Naive thymus-derived CD4-positive, alpha-beta T cell (primary cell): ENCODE measurements at regions of chr7 and their contacts with region 1.

Region 1: DNA sequence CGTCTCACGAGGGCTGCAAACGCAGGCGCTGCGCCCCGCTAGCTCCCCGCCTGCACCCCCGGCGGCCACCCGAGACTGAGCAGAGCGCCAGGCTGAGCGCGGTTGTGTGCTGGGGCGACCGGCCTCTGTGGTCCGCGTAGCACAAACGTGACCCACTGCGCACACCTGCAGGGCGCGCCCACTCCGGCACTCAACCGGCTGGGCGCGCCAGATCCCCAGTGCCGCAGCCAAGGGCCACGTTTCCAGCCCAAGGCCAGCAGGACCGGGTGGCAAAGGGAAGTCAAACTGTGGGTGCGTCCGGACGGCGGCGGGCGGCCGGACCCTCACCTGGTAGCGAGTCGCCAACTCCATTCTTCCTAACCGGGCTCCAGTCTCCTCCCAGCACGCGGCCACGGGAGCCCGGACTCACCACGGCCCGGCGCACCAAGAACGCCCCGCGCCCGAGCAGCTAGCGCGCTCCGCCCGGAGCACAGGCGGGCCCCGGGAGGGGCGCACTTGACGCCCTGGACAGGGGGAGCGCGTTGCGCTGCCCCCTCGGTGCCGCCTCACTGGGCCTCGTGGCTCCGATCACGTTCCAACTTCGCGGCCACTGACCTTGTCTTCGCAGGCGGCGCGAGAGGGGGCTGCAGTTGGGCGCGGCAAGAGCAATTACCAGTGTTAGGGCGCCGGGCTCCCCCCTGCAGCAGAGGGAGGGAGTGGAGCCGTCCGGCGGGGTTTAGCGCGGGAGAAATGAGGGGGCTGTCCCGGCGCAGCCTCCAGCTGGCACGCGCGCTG is at the start of gene CDCA7L:
- DNase-seq: peak; percentile 40 to 77 (median 66)
- ATAC-seq: peak; percentile 85
- H3K4me3 ChIP-seq: peak within 1 kb of the TSS; percentile 57
- H3K4me3 Mint-ChIP-seq: peak within 1 kb of the TSS; percentile 86 to 95 (median 92)
- H3K27ac ChIP-seq: peak within 1 kb of the TSS; percentile 56
- H3K27ac Mint-ChIP-seq: peak within 1 kb of the TSS; percentile 60 to 87 (median 75)
- H3K4me1 ChIP-seq: peaks cover 0 to 33% of the 10 kb centered on the region in 2 donors
- H3K4me1 Mint-ChIP-seq: peaks cover 29 to 80% (median 62%) of the 10 kb centered on the region in 7 donors
- H3K27me3 ChIP-seq: no peaks in the 10 kb centered on the region
- H3K27me3 Mint-ChIP-seq: peaks cover 0 to 20% (median 0%) of the 10 kb centered on the region in 5 donors
- total RNA-seq, gene CDCA7L: 24.3 to 47.0 (median 41.0) TPM

Region 2: GRCh38 chr7:21850531-21851285 is 94.9 kb before region 1 on chr7:
- CTCF ChIA-PET with region 1: interaction called, 3 read pairs
- POLR2A ChIA-PET with region 1: interaction called, 4 read pairs
- intact Hi-C with region 1: loop called in 1 of 2 experiments (anchors 2 kb)
- DNase-seq: no peak
- ATAC-seq: no peak
- H3K4me3 ChIP-seq: peak overlapping the region; percentile 27
- H3K4me3 Mint-ChIP-seq: peak overlapping the region in 9 of 10 donors; percentile 13 to 91 (median 78)
- H3K27ac ChIP-seq: no peak overlapping the region
- H3K27ac Mint-ChIP-seq: peak overlapping the region in 8 of 9 donors; percentile 85 to 97 (median 92)
- H3K4me1 ChIP-seq: peaks cover 0 to 20% of the 10 kb centered on the region in 2 donors
- H3K4me1 Mint-ChIP-seq: peaks cover 6 to 44% (median 34%) of the 10 kb centered on the region in 7 donors
- H3K27me3 ChIP-seq: no peaks in the 10 kb centered on the region
- H3K27me3 Mint-ChIP-seq: peaks cover 0 to 5% (median 0%) of the 10 kb centered on the region in 5 donors

Region 3: DNA sequence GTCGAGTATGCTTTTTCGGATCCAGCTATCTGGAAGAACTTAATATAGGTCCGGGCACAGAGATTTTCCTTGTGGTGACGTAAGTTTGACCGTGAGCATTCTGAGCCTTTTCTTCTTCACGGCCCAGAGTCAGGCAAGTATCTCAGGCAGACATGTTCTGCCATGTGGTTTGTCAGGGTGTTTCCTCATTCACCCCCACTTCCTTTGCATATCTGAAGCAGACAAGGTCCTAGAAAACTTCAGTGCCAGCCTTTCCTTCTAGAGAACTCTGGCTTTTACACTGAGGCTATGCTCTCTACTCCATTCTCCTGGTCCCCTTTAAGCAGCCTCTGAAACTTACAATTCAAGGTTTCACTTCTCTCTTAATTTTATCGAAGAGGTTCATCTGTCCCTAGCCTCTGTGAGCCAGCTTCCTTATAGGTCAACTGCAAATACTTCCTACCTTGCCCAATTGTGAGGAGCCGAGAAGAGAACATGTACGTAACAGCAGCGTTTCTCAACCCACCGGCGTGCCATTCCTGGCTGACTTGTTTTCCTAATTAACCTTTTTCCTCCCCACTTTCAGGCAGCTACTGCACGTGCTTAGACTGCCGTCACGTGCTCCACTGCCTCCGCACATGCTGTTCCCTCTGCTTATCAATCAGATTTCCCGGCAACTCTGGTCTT is 47.2 kb before region 1 on chr7:
- CTCF ChIA-PET with region 1: no interaction called
- POLR2A ChIA-PET with region 1: no interaction called
- intact Hi-C with region 1: loop called (anchors 2 kb)
- DNase-seq: peak in 6 of 9 donors; percentile 36 to 59 (median 48)
- ATAC-seq: peak; percentile 77
- H3K4me3 ChIP-seq: peak overlapping the region; percentile 46
- H3K4me3 Mint-ChIP-seq: peak overlapping the region; percentile 81 to 90 (median 86)
- H3K27ac ChIP-seq: peak overlapping the region; percentile 46
- H3K27ac Mint-ChIP-seq: peak overlapping the region; percentile 90 to 98 (median 96)
- H3K4me1 ChIP-seq: peaks cover 0 to 19% of the 10 kb centered on the region in 2 donors
- H3K4me1 Mint-ChIP-seq: peaks cover 17 to 38% (median 25%) of the 10 kb centered on the region in 7 donors
- H3K27me3 ChIP-seq: no peaks in the 10 kb centered on the region
- H3K27me3 Mint-ChIP-seq: no peaks in the 10 kb centered on the region

Region 4: DNA sequence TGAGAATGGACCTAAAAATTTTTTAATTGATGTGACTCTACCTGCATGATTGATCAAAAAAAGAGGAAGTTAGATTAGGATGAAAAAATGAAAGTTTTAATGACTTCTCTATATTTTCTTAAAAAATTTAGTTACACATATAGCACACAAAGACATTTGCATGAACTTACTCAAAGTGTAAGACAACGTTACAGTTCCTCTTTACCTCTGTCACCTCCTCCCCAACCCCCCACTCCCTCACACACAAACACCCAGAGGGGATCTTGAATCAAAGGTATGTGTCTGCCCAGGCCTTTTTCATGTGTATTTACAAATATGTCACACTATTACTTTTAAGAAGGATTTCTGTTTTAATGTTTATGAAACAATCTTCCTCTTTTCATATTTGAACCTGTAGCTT is 20.6 kb after region 1 on chr7:
- CTCF ChIA-PET with region 1: no interaction called
- POLR2A ChIA-PET with region 1: interaction called, 3 read pairs
- intact Hi-C with region 1: loop called in 1 of 2 experiments (anchors 2 kb)
- DNase-seq: no peak
- ATAC-seq: peak; percentile 40
- H3K4me3 ChIP-seq: no peak overlapping the region
- H3K4me3 Mint-ChIP-seq: no peak overlapping the region
- H3K27ac ChIP-seq: no peak overlapping the region
- H3K27ac Mint-ChIP-seq: no peak overlapping the region
- H3K4me1 ChIP-seq: peaks cover 0 to 12% of the 10 kb centered on the region in 2 donors
- H3K4me1 Mint-ChIP-seq: peaks cover 4 to 28% (median 10%) of the 10 kb centered on the region in 7 donors
- H3K27me3 ChIP-seq: no peaks in the 10 kb centered on the region
- H3K27me3 Mint-ChIP-seq: peaks cover 0 to 9% (median 0%) of the 10 kb centered on the region in 5 donors

Region 5: DNA sequence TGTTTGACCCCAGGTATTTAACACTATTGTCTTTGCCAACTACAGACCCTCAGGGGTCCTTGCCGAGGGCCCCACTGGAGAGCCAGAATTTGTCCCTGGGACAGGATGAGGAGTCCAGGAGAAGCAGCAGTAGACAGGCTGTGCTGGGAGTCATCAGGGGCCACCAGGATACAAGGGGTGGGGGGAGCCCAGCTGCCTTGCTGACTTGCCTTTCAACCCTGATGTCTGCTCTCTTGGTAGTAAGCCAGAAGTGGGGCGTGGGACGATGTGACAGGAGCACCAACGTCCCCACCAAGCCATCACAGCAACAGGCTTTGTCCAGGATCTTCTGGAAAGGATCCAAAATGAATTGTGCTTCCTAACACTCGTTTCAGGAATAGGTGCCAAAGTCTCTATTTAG is 62.4 kb after region 1 on chr7:
- CTCF ChIA-PET with region 1: no interaction called
- POLR2A ChIA-PET with region 1: no interaction called
- intact Hi-C with region 1: no loop called
- DNase-seq: no peak
- ATAC-seq: no peak
- H3K4me3 ChIP-seq: no peak overlapping the region
- H3K4me3 Mint-ChIP-seq: no peak overlapping the region
- H3K27ac ChIP-seq: no peak overlapping the region
- H3K27ac Mint-ChIP-seq: no peak overlapping the region
- H3K4me1 ChIP-seq: no peaks in the 10 kb centered on the region
- H3K4me1 Mint-ChIP-seq: no peaks in the 10 kb centered on the region
- H3K27me3 ChIP-seq: no peaks in the 10 kb centered on the region
- H3K27me3 Mint-ChIP-seq: peaks cover 0 to 16% (median 11%) of the 10 kb centered on the region in 5 donors

Region 6: GRCh38 chr7:22822486-22823141 is 877.0 kb after region 1 on chr7 and contains the start of gene TOMM7:
- CTCF ChIA-PET with region 1: no interaction called
- POLR2A ChIA-PET with region 1: interaction called, 3 read pairs
- intact Hi-C with region 1: loop called in 1 of 2 experiments (anchors 2 kb)
- DNase-seq: peak; percentile 68 to 92 (median 90)
- ATAC-seq: peak; percentile 99
- H3K4me3 ChIP-seq: peak within 1 kb of the TSS; percentile 83
- H3K4me3 Mint-ChIP-seq: peak within 1 kb of the TSS; percentile 93 to 100 (median 99)
- H3K27ac ChIP-seq: peak within 1 kb of the TSS; percentile 94
- H3K27ac Mint-ChIP-seq: peak within 1 kb of the TSS; percentile 94 to 100 (median 99)
- H3K4me1 ChIP-seq: peaks cover 6 to 19% of the 10 kb centered on the region in 2 donors
- H3K4me1 Mint-ChIP-seq: peaks cover 15 to 53% (median 43%) of the 10 kb centered on the region in 7 donors
- H3K27me3 ChIP-seq: peaks cover 0 to 4% of the 10 kb centered on the region in 2 donors
- H3K27me3 Mint-ChIP-seq: peaks cover 15 to 36% (median 19%) of the 10 kb centered on the region in 5 donors
- total RNA-seq, gene TOMM7: 302 to 737 (median 649) TPM

Region 7: GRCh38 chr7:23105644-23106056 is 1160.0 kb after region 1 on chr7 and contains the start of gene KLHL7:
- CTCF ChIA-PET with region 1: no interaction called
- POLR2A ChIA-PET with region 1: no interaction called
- intact Hi-C with region 1: loop called in 1 of 2 experiments (anchors 5 kb)
- DNase-seq: peak; percentile 90 to 95 (median 93)
- ATAC-seq: peak; percentile 99
- H3K4me3 ChIP-seq: peak within 1 kb of the TSS; percentile 93
- H3K4me3 Mint-ChIP-seq: peak within 1 kb of the TSS; percentile 90 to 99 (median 96)
- H3K27ac ChIP-seq: peak within 1 kb of the TSS; percentile 90
- H3K27ac Mint-ChIP-seq: peak within 1 kb of the TSS; percentile 91 to 97 (median 96)
- H3K4me1 ChIP-seq: peaks cover 4 to 18% of the 10 kb centered on the region in 2 donors
- H3K4me1 Mint-ChIP-seq: peaks cover 33 to 51% (median 47%) of the 10 kb centered on the region in 7 donors
- H3K27me3 ChIP-seq: no peaks in the 10 kb centered on the region
- H3K27me3 Mint-ChIP-seq: no peaks in the 10 kb centered on the region
- total RNA-seq, gene KLHL7: 16.9 to 22.9 (median 22.7) TPM